Activated B cell treated with CpG ODN at 0.5 μM for 24 hours (primary cell): ENCODE measurements at regions of chr6 and their contacts with region 1.

Region 1: GRCh38 chr6:21003780-21004541 is 469.7 kb downstream of the CDKAL1 start:
- DNase-seq: no peak
- ATAC-seq: peak; percentile 59
- H3K4me3 Mint-ChIP-seq: peak overlapping the region; percentile 13
- H3K27ac Mint-ChIP-seq: peak overlapping the region; percentile 80
- H3K4me1 Mint-ChIP-seq: peaks cover 36% of the 10 kb centered on the region
- H3K27me3 Mint-ChIP-seq: no peaks in the 10 kb centered on the region
- CTCF ChIP-seq: no peak

Region 2: DNA sequence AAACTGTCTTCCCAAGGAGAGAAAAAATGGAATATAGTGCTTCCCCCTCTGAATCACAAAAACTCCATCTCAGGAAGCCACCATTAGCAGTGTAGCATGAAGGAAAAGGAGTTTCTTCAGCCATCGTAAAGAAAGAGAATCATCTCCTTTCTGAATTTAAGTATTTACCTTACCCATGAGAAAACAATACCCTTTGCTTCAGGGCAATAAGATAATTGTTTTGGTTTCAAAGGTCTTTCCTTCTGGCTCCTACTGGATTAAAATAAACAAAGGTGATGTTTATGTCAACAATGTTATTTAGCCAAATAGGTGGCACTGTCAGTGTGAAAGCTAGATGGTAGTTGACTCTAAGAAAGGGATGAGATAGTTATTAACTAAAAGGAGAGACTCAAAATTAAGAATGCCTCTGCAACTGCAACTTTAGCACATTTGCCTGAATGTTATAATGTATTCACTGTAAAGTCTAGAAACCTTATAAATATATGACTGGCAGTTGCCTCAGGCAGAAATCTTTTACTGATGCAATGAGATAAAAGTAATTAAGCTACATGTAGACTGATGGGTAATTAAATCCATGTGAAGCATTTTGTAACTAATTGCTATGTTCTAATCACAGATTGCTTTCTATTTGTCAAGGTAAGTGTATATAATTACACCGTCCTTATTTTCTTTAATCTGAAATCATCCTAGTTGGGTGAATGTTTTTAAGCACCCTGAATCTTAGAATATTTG is 70.7 kb before region 1 on chr6:
- CTCF ChIA-PET with region 1: no interaction called
- POLR2A ChIA-PET with region 1: interaction called, 10 read pairs
- intact Hi-C with region 1: no loop called
- DNase-seq: no peak
- ATAC-seq: no peak
- H3K4me3 Mint-ChIP-seq: no peak overlapping the region
- H3K27ac Mint-ChIP-seq: no peak overlapping the region
- H3K4me1 Mint-ChIP-seq: no peaks in the 10 kb centered on the region
- H3K27me3 Mint-ChIP-seq: no peaks in the 10 kb centered on the region
- CTCF ChIP-seq: no peak

Region 3: GRCh38 chr6:21022343-21023107 is 18.6 kb after region 1 on chr6:
- CTCF ChIA-PET with region 1: no interaction called
- POLR2A ChIA-PET with region 1: no interaction called
- intact Hi-C with region 1: loop called (anchors 2 kb)
- DNase-seq: peak; percentile 20
- ATAC-seq: peak; percentile 85
- H3K4me3 Mint-ChIP-seq: peak overlapping the region; percentile 58
- H3K27ac Mint-ChIP-seq: peak overlapping the region; percentile 87
- H3K4me1 Mint-ChIP-seq: peaks cover 20% of the 10 kb centered on the region
- H3K27me3 Mint-ChIP-seq: no peaks in the 10 kb centered on the region
- CTCF ChIP-seq: no peak

Region 4: GRCh38 chr6:21037453-21037852 is 33.5 kb after region 1 on chr6:
- CTCF ChIA-PET with region 1: no interaction called
- POLR2A ChIA-PET with region 1: no interaction called
- intact Hi-C with region 1: loop called (anchors 5 kb)
- DNase-seq: no peak
- ATAC-seq: peak; percentile 90
- H3K4me3 Mint-ChIP-seq: no peak overlapping the region
- H3K27ac Mint-ChIP-seq: no peak overlapping the region
- H3K4me1 Mint-ChIP-seq: peaks cover 18% of the 10 kb centered on the region
- H3K27me3 Mint-ChIP-seq: no peaks in the 10 kb centered on the region
- CTCF ChIP-seq: no peak

Region 5: GRCh38 chr6:21438237-21438985 is 434.4 kb after region 1 on chr6:
- CTCF ChIA-PET with region 1: no interaction called
- POLR2A ChIA-PET with region 1: interaction called, 3 read pairs
- intact Hi-C with region 1: loop called (anchors 5 kb)
- DNase-seq: no peak
- ATAC-seq: peak; percentile 89
- H3K4me3 Mint-ChIP-seq: peak overlapping the region; percentile 72
- H3K27ac Mint-ChIP-seq: peak overlapping the region; percentile 87
- H3K4me1 Mint-ChIP-seq: peaks cover 20% of the 10 kb centered on the region
- H3K27me3 Mint-ChIP-seq: no peaks in the 10 kb centered on the region
- CTCF ChIP-seq: no peak